Mammary epithelial cell (primary cell): ENCODE measurements at regions of chr5 and their contacts with region 1.

Region 1: GRCh38 chr5:149442563-149443182 is 63.6 kb upstream of the IL17B start:
- DNase-seq: peak; percentile 80
- H3K4me3 ChIP-seq: no peak overlapping the region
- H3K27ac ChIP-seq: peak overlapping the region; percentile 89
- H3K4me1 ChIP-seq: peaks cover 70% of the 10 kb centered on the region
- H3K27me3 ChIP-seq: no peaks in the 10 kb centered on the region
- CTCF ChIP-seq: peak; percentile 91 to 94

Region 2: GRCh38 chr5:148682058-148683026 is 760.3 kb before region 1 on chr5:
- CTCF ChIA-PET with region 1: no interaction called
- dilution Hi-C with region 1: no loop called
- in situ Hi-C with region 1: no loop called
- intact Hi-C with region 1: no loop called
- DNase-seq: no peak
- H3K4me3 ChIP-seq: no peak overlapping the region
- H3K27ac ChIP-seq: no peak overlapping the region
- H3K4me1 ChIP-seq: no peaks in the 10 kb centered on the region
- H3K27me3 ChIP-seq: no peaks in the 10 kb centered on the region
- CTCF ChIP-seq: no peak

Region 3: GRCh38 chr5:149551200-149552037 is 108.7 kb after region 1 on chr5 and contains the start of gene CSNK1A1:
- CTCF ChIA-PET with region 1: no interaction called
- dilution Hi-C with region 1: loop called (anchors 5 kb)
- in situ Hi-C with region 1: loop called in 1 of 2 experiments (anchors 10 kb)
- intact Hi-C with region 1: loop called (anchors 1 kb)
- DNase-seq: peak; percentile 99
- H3K4me3 ChIP-seq: peak within 1 kb of the TSS; percentile 71 to 94 (median 77)
- H3K27ac ChIP-seq: peak within 1 kb of the TSS; percentile 91
- H3K4me1 ChIP-seq: peaks cover 20% of the 10 kb centered on the region
- H3K27me3 ChIP-seq: no peaks in the 10 kb centered on the region
- CTCF ChIP-seq: peak; percentile 65 to 82
- total RNA-seq, gene CSNK1A1: 444 to 457 TPM